ENCODE measurements at regions of chr4 and their contacts with region 1.

Region 1: DNA sequence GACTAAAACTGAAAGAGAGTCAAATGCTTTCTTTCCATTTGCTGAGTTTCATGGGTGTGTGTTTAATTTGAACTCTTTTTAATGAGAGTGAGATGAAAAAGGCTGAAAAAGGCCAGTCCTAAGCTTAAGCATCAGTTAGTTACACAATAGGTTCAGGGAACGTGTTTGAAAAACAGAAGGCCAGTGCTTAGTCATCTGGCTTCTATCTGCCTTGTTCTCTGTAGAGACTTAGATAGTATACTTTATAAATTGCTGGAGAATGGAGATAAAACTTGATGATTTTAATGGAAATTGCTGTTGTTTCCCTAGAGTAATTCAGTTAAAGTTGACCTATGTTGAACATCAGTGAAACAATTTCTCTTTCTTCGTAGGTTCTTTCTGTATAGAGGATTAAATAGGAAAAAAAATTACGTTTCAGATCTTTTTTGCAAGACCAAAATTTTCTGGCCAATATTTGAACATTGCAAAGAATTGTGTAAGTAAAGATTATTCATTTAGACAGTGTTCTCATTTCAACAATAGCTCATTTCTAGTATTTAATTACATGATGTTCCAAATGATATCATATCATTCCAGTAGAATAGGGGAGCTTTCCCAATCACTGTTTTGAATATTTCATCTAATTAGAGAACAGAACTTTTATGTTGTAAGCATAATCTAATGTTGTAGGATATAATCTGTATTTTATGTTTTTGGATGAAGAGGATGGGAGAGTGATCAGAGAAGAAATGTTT is 1088.8 kb downstream of the ADGRL3 start:
- DNase-seq: no peak
- ATAC-seq: peak in 4 of 8 donors; percentile 55 to 85 (median 66)
- H3K4me3 ChIP-seq: no peak overlapping the region
- H3K27ac ChIP-seq: no peak overlapping the region
- H3K4me1 ChIP-seq: peaks cover 0 to 13% (median 0%) of the 10 kb centered on the region in 9 donors
- H3K27me3 ChIP-seq: no peaks in the 10 kb centered on the region
- CTCF ChIP-seq: no peak

Region 2: DNA sequence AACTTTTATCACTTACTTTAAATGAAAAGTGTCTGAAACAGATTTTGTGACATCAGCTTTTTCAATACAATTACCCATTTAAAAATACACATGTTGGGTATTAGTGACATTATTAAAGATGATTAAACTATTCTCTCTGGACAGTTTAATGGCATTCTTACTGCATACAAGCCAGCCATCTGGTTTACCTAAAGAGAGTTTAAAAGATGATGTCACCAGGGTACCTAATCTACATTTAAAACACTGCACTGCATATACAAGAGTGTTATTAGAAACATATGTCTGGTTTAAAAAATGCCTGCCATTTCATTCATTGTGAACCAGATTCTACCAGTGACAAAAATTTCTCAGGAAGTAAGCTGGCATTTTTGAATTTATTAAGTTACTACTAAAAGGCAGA is 169.8 kb before region 1 on chr4:
- intact Hi-C with region 1: no loop called
- DNase-seq: no peak
- ATAC-seq: no peak
- H3K4me3 ChIP-seq: no peak overlapping the region
- H3K27ac ChIP-seq: no peak overlapping the region
- H3K4me1 ChIP-seq: no peaks in the 10 kb centered on the region
- H3K27me3 ChIP-seq: no peaks in the 10 kb centered on the region
- CTCF ChIP-seq: no peak

Region 3: DNA sequence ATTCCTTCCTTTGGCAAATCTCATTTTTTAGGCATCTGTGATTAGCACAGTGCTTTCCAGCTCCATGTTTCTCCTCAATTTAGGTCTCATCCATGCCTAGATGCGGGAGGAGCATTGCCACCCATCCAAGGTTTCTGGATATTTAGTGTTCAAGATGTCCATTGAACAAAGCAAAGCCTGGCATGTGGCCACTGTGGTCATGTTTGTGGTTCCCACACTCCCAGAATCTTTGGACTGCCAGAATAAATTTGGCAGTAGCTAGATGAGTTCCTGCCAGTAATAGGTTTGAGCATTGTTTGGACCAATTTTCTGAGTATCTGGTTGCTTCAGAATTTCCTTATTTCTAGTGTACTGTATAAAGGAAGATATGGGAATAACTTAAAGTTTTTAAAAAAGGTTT is 35.2 kb after region 1 on chr4:
- intact Hi-C with region 1: loop called in 1 of 10 experiments (anchors 1 kb)
- DNase-seq: peak; percentile 19 to 38
- ATAC-seq: peak in 4 of 8 donors; percentile 15 to 39 (median 36)
- H3K4me3 ChIP-seq: no peak overlapping the region
- H3K27ac ChIP-seq: no peak overlapping the region
- H3K4me1 ChIP-seq: peaks cover 0 to 7% (median 0%) of the 10 kb centered on the region in 9 donors
- H3K27me3 ChIP-seq: no peaks in the 10 kb centered on the region
- CTCF ChIP-seq: no peak

Region 4: GRCh38 chr4:62457356-62457755 is 168.4 kb after region 1 on chr4:
- intact Hi-C with region 1: no loop called
- DNase-seq: no peak
- ATAC-seq: no peak
- H3K4me3 ChIP-seq: no peak overlapping the region
- H3K27ac ChIP-seq: no peak overlapping the region
- H3K4me1 ChIP-seq: no peaks in the 10 kb centered on the region
- H3K27me3 ChIP-seq: no peaks in the 10 kb centered on the region
- CTCF ChIP-seq: no peak